PC-3 (cell line): ENCODE measurements at regions of chr20 and their contacts with region 1.

Region 1: DNA sequence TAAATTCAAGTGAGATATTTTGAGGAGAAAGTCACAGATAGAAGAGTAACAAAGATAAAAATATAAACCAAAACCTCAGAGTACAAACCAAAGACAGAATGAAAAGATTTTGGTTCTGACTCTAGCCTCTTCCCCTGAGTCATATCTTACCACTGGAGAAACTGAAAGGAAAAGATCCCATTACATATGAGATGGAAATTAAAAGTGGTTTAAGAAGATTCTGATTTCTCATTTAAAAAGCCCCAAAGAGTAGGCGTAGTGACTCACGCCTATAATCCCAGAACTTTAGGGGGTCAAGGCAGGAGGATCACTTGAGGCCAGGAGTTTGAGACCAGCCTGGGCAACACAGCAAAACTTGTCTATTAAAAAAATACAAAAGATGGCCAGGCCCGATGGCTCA is 30.6 kb downstream of the SPINT4 start:
- DNase-seq: no peak
- ATAC-seq: no peak
- H3K4me3 ChIP-seq: no peak overlapping the region
- H3K27ac ChIP-seq: no peak overlapping the region
- H3K4me1 ChIP-seq: no peaks in the 10 kb centered on the region
- H3K27me3 ChIP-seq: 0 out of 2 replicates have a peak, but pooled peaks cover 4% of the 10 kb centered on the region
- CTCF ChIP-seq: no peak

Region 2: GRCh38 chr20:45611054-45611453 is 141.7 kb before region 1 on chr20:
- CTCF ChIA-PET with region 1: no interaction called
- POLR2A ChIA-PET with region 1: interaction called, 10 read pairs
- intact Hi-C with region 1: no loop called
- DNase-seq: peak; percentile 85
- ATAC-seq: peak; percentile 74
- H3K4me3 ChIP-seq: no peak overlapping the region; the same call in 1 of the 2 replicates
- H3K27ac ChIP-seq: peak overlapping the region; percentile 59
- H3K4me1 ChIP-seq: peaks cover 23% of the 10 kb centered on the region
- H3K27me3 ChIP-seq: no peaks in the 10 kb centered on the region
- CTCF ChIP-seq: no peak

Region 3: DNA sequence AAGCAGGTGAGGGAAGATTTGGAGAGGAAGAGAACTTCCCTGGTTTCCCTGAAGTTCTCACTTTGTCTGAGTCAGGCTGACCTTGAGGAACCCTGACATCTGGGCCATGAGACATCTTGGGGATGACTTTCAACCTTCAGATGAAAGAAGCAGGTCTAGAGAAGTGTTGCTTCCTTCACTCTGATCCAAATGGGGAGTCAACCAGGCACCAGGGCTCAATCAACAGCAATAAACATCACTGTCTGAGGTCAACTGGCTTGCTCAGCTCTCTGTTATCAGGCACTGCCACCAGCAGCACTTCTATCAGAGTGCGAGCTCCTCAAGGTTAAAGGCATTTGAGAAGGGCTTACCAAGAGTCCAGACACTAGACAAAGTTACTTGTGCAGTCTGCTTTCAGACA is 98.2 kb after region 1 on chr20:
- CTCF ChIA-PET with region 1: no interaction called
- POLR2A ChIA-PET with region 1: no interaction called
- intact Hi-C with region 1: no loop called
- DNase-seq: no peak
- ATAC-seq: no peak
- H3K4me3 ChIP-seq: no peak overlapping the region
- H3K27ac ChIP-seq: no peak overlapping the region
- H3K4me1 ChIP-seq: peaks cover 3% of the 10 kb centered on the region
- H3K27me3 ChIP-seq: no peaks in the 10 kb centered on the region
- CTCF ChIP-seq: no peak